ENCODE measurements at regions of chr2 and their contacts with region 1.

Region 1: DNA sequence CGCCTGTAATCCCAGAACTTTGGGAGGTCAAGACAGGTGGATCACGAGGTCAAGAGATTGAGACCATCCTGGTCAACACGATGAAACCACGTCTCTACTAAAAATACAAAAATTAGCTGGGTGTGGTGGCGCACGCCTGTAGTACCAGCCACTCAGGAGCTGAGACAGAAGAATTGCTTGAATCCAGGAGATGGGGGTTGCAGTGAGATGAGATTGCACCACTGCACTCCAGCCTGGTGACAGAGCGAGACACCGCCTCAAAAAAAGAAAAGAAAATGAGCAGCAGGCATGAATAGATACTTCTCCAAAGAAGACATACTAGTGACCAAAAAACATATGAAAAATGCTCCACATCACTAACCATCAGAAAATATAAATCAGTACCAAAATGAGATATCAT is 138.6 kb downstream of the DNAH7 start:
- DNase-seq: no peak
- ATAC-seq: no peak
- H3K4me3 ChIP-seq: no peak overlapping the region
- H3K4me3 Mint-ChIP-seq: no peak overlapping the region
- H3K27ac ChIP-seq: no peak overlapping the region
- H3K27ac Mint-ChIP-seq: no peak overlapping the region
- H3K4me1 ChIP-seq: no peaks in the 10 kb centered on the region
- H3K4me1 Mint-ChIP-seq: no peaks in the 10 kb centered on the region
- H3K27me3 ChIP-seq: no peaks in the 10 kb centered on the region
- H3K27me3 Mint-ChIP-seq: no peaks in the 10 kb centered on the region
- CTCF ChIP-seq: no peak

Region 2: DNA sequence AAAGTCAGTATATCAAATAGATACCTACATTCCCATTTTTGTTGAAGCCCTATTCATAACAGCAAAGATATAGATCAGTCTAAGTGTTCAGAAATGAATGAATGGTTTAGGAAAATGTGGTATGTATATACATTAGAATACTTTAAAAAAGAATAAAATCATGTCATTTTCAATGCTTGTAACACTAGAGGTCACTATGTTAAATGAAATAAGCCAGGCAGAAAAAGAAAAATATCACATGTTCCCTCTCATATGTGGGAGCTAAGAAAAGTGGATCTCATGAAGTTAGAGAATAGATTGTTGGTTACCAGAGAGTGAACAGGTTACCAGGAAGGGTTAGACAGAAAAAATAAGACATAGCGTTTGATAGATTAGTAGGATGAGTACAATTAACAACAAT is 1384.1 kb before region 1 on chr2:
- CTCF ChIA-PET with region 1: no interaction called
- POLR2A ChIA-PET with region 1: no interaction called
- intact Hi-C with region 1: loop called in 1 of 2 experiments (anchors 10 kb)
- DNase-seq: peak in 1 of 14 experiments; percentile 2
- ATAC-seq: no peak
- H3K4me3 ChIP-seq: no peak overlapping the region
- H3K4me3 Mint-ChIP-seq: no peak overlapping the region
- H3K27ac ChIP-seq: no peak overlapping the region
- H3K27ac Mint-ChIP-seq: no peak overlapping the region
- H3K4me1 ChIP-seq: no peaks in the 10 kb centered on the region
- H3K4me1 Mint-ChIP-seq: no peaks in the 10 kb centered on the region
- H3K27me3 ChIP-seq: no peaks in the 10 kb centered on the region
- H3K27me3 Mint-ChIP-seq: no peaks in the 10 kb centered on the region
- CTCF ChIP-seq: no peak

Region 3: DNA sequence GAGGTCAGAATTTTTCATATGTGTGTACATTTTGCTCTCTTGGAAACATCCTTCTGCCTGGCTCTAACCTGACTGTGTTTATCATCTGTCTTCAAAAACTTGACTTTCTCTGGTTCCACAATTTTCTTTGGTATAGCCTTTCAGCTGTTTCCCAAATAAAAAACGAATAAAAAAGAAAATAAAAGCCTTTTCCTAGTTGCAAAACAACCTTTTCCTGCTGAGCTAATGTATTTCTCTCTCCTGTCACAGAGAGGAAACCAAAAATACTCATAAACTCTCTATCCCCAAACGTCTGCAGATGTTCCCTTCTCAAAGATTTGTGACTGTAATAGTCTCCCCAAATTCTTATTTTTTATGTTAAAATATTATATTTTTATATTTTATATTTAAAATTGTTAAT is 778.4 kb before region 1 on chr2:
- CTCF ChIA-PET with region 1: no interaction called
- POLR2A ChIA-PET with region 1: no interaction called
- intact Hi-C with region 1: no loop called
- DNase-seq: no peak
- ATAC-seq: no peak
- H3K4me3 ChIP-seq: no peak overlapping the region
- H3K4me3 Mint-ChIP-seq: no peak overlapping the region
- H3K27ac ChIP-seq: no peak overlapping the region
- H3K27ac Mint-ChIP-seq: no peak overlapping the region
- H3K4me1 ChIP-seq: no peaks in the 10 kb centered on the region
- H3K4me1 Mint-ChIP-seq: no peaks in the 10 kb centered on the region
- H3K27me3 ChIP-seq: no peaks in the 10 kb centered on the region
- H3K27me3 Mint-ChIP-seq: no peaks in the 10 kb centered on the region
- CTCF ChIP-seq: no peak

Region 4: DNA sequence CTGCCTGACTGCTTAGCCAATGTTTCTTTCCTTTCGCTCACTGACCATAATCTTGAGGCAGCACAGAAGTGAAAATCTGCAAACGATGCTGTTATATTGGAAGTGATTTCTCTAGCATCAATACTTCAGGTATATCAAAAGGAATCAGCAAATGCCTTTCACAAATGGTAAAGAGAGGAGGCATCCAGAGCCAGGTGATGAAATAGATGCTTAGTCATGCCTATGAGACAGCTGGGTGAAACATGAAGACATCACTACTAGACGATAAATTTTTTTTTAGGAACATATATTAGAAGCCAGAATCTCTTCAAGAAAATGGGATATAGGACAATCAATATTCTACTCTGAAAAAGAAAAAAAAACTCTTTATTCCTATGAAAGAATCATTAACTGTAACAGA is 522.3 kb before region 1 on chr2:
- CTCF ChIA-PET with region 1: no interaction called
- POLR2A ChIA-PET with region 1: no interaction called
- intact Hi-C with region 1: loop called in 1 of 2 experiments (anchors 10 kb)
- DNase-seq: no peak
- ATAC-seq: no peak
- H3K4me3 ChIP-seq: no peak overlapping the region
- H3K4me3 Mint-ChIP-seq: no peak overlapping the region
- H3K27ac ChIP-seq: no peak overlapping the region
- H3K27ac Mint-ChIP-seq: no peak overlapping the region
- H3K4me1 ChIP-seq: no peaks in the 10 kb centered on the region
- H3K4me1 Mint-ChIP-seq: no peaks in the 10 kb centered on the region
- H3K27me3 ChIP-seq: no peaks in the 10 kb centered on the region
- H3K27me3 Mint-ChIP-seq: no peaks in the 10 kb centered on the region
- CTCF ChIP-seq: no peak

Region 5: DNA sequence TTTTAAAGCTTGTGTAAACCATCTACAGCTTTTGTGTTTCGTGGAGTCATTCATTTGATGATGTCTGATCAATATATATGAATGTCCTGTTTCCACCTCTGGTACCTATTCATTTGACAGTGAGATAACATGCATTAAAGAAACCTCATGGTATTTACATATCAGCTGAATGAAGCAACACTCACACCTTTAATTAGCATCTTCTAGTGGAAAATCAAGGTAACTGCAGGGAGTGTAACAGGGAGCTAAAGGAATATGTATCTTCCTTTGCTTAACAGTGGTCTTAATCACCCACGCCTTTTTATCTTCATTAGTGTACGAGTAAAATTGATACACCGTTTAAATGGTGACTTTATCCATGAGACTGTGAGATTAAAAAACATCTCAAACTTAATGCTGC is 257.4 kb before region 1 on chr2:
- CTCF ChIA-PET with region 1: no interaction called
- POLR2A ChIA-PET with region 1: no interaction called
- intact Hi-C with region 1: loop called (anchors 10 kb)
- DNase-seq: no peak
- ATAC-seq: no peak
- H3K4me3 ChIP-seq: no peak overlapping the region
- H3K4me3 Mint-ChIP-seq: no peak overlapping the region
- H3K27ac ChIP-seq: no peak overlapping the region
- H3K27ac Mint-ChIP-seq: no peak overlapping the region
- H3K4me1 ChIP-seq: peaks cover 5% of the 10 kb centered on the region
- H3K4me1 Mint-ChIP-seq: peaks cover 66% of the 10 kb centered on the region
- H3K27me3 ChIP-seq: no peaks in the 10 kb centered on the region
- H3K27me3 Mint-ChIP-seq: no peaks in the 10 kb centered on the region
- CTCF ChIP-seq: no peak

Measured in CD4-positive, alpha-beta T cell (primary cell).